ENCODE measurements at regions of chr13 and their contacts with region 1.

Region 1: DNA sequence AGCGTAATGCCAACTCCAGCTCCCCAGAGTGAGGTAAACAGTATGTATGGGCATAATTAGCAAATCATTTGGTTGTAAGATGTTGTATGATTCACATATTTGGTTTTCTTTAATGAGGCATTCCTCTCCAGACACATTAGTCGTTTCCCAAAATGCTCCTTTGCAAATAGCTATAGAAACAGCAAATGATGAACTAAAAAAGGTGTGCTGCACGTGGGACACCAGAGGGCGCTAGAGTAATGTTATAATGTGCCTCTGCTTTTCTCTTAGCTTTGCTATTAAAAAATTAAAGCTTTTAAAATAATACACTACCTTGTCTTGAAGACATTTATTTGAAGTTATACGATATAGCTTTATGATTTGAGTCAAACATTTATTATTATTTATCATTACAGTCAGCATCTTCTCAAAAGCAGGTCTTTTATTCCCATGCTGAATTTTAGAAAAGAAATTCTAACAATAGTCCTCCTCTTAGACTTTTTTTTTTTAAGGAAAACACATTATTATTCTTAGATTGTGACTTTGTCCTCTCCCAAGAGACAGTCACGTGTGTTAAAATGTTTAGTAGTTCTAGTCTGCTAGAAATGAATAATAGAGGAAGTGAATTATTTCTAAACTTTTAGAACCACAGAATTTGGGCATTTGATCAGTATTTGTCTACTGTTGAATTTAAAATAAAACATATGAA is 121.6 kb upstream of the FRY start:
- H3K4me3 Mint-ChIP-seq: no peak overlapping the region
- H3K27ac Mint-ChIP-seq: peak overlapping the region; percentile 16
- H3K4me1 Mint-ChIP-seq: peaks cover 43% of the 10 kb centered on the region
- H3K27me3 Mint-ChIP-seq: no peaks in the 10 kb centered on the region

Region 2: GRCh38 chr13:31846182-31846950 is 63.6 kb before region 1 on chr13:
- intact Hi-C with region 1: loop called (anchors 2 kb)
- H3K4me3 Mint-ChIP-seq: peak overlapping the region; percentile 85
- H3K27ac Mint-ChIP-seq: peak overlapping the region; percentile 78
- H3K4me1 Mint-ChIP-seq: peaks cover 28% of the 10 kb centered on the region
- H3K27me3 Mint-ChIP-seq: peaks cover 7% of the 10 kb centered on the region

Region 3: DNA sequence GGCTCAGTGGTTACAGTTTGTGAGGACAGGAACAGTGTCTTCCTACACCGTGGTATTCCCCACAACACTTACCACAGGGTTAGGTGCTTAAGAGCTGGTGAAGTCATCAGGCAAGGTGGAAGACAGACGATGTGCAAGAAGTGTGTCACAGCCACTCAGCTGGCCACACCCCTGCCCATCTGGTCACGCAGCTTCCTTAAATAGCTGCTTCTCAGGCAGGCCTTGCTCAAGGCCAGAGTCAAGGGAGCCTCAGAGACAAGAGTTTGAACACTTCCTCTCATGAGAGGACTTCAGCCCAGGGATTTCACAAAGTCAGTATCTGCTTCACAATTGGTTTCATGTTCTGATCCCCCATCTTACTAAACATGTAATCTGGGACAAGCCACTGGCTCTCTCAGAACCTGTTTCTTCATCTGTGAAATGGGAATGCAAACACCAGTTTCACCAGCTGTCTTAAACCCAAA is 41.2 kb after region 1 on chr13:
- intact Hi-C with region 1: loop called (anchors 5 kb)
- H3K4me3 Mint-ChIP-seq: no peak overlapping the region
- H3K27ac Mint-ChIP-seq: peak overlapping the region; percentile 86
- H3K4me1 Mint-ChIP-seq: peaks cover 60% of the 10 kb centered on the region
- H3K27me3 Mint-ChIP-seq: no peaks in the 10 kb centered on the region

Region 4: GRCh38 chr13:31987535-31988170 is 77.6 kb after region 1 on chr13:
- intact Hi-C with region 1: loop called (anchors 5 kb)
- H3K4me3 Mint-ChIP-seq: no peak overlapping the region
- H3K27ac Mint-ChIP-seq: peak overlapping the region; percentile 11
- H3K4me1 Mint-ChIP-seq: peaks cover 25% of the 10 kb centered on the region
- H3K27me3 Mint-ChIP-seq: no peaks in the 10 kb centered on the region